Sciatic nerve (tissue), 2 donors: ENCODE measurements at regions of chrX and their contacts with region 1.

Region 1: GRCh38 chrX:40867352-40867751 is 132.0 kb upstream of the MED14 start:
- DNase-seq: no peak
- ATAC-seq: no peak

Region 2: DNA sequence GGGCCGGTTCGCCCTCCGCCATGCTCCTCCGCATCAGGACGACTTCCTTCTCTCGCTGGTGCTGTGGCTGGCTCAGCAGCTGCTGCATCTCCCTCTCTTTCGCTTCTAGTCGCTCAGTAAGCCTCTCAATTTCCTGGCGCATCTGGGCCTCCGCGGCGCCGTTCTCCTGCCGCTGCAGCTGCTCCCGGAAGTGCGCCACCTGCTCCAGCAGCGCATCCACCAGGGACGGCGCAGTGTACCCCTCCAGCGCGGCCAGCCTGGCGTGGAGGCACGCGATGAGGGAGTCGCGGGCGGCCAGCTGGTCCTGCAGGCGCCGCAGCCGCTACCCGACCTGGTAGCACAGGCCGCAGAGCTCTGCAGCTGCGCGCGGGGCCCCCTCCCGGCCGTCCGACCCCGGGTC is 34.6 kb before region 1 on chrX:
- intact Hi-C with region 1: loop called (anchors 1 kb)
- DNase-seq: no peak
- ATAC-seq: no peak